ENCODE measurements at regions of chr19 and their contacts with region 1.

Region 1: DNA sequence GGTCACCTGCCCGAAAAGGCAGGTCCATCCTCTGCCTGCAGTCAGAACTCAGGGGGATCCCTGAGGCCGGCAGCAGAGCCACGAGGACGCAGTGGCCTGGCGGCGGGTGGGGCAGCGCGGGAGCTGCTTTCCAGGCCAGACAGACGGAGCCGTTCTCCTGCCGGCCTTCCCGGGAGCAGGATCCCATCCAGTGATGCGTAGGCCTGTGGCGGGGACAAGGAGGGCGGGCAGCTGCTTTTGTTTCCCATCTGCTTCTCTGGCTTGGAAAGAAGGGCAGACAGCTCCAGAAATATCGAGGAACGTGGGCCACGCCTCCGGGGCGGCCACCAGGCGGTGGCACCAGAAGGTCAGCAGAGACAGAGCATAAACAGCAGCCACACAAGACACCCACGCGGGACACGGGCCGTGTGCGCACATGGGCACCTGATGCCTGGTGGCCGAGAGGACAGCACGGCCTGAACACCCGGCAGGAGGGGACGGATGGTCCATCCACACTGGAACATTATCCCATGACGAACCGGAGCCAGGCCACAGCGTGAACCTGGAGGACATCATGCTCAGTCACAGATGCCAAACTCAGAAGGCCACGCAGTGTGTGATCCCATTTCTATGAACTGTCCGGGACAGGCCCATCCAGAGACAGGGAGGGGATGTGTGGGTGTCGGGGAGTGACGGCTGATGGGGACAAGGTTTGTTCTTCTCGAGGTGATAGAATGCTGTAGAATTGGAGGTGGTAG is 13.9 kb upstream of the MKNK2 start:
- DNase-seq: no peak
- ATAC-seq: no peak
- H3K4me3 ChIP-seq: no peak overlapping the region
- H3K27ac ChIP-seq: peak overlapping the region; percentile 61
- H3K4me1 ChIP-seq: peaks cover 28% of the 10 kb centered on the region
- H3K27me3 ChIP-seq: no peaks in the 10 kb centered on the region
- CTCF ChIP-seq: no peak

Region 2: DNA sequence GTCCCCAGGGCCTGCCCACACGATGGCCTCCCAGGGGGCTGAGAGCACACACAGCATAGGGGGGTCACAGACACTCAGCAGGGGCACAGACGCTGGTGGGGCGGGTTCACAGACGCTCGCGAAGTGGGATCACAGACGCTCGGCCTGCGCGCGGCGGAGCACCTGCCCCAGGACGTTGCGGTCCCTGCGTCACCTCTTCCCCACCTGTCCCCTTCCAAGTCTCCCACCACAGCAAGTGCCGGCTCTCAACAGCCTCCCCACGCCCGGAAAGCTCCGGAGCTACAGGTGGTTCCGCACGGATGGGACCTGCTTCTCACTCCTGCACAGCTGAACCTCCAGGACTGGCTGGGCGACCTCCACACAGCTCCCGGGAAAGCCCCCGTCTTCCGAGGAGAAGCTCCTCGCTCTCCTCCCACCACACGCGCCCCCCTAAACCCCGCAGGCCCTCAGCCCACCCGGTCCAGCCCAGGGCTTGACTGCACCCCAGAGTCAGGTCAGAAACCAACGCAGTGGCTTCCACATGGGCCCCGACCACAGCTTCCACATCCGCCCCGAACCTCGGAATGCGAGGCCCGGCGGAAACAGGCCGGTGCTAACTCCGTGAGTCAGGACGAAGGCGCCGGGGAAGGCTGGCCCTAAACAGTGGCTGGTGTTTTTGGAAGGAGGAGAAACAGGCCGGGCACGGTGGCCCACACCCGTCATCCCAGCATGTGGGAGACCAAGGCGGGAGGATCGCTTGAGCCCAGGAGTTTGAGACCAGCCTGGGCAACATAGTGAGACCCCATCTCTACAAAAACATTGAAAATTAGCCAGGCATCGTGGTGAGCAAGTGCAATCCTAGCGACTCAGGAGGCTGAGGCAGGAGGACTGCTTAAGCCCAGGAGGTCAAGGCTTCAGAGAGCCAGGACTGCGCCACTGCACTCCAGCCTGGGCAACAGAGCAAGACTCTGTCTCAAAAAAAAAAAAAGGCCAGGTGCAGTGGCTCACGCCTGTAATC is 65.9 kb before region 1 on chr19:
- intact Hi-C with region 1: no loop called
- DNase-seq: no peak
- ATAC-seq: peak; percentile 19
- H3K4me3 ChIP-seq: no peak overlapping the region
- H3K27ac ChIP-seq: no peak overlapping the region
- H3K4me1 ChIP-seq: no peaks in the 10 kb centered on the region
- H3K27me3 ChIP-seq: no peaks in the 10 kb centered on the region
- CTCF ChIP-seq: no peak

Region 3: DNA sequence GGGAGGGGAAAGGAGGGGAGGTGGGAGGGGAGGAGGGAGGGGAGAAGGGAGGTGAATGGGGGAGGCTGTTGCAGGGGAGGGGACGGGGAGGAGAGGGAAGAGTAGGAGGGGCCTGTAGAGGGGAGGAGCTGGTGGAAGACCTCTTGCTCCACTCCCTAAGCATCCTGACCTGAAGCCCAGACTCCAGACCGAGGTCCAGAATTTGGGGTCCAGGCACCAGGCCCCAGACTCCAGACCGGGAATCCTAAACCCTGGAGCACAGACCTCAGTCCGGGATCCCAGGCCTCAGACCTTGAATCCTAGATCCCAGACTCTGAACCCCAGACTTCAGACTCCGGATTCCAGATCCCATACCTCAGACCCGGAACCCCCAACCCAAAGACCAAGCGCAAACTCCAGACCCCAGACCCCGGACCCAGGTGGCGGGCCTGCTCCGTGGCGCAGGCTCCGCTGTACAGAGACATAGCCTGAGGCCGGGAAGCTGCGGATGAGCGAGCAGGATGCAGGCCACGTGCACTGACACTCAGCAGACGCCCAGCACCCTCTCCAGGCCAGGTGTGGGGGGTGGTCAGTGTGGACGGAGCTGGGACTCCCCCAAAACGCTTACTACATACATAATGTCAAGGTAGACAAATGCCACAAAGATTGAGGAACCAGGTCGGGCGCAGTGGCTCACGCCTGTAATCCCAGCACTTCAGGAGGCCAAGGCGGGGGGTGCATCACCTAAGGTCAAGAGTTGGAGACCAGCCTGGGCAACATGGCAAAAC is 48.7 kb before region 1 on chr19:
- intact Hi-C with region 1: loop called (anchors 5 kb)
- DNase-seq: no peak
- ATAC-seq: peak; percentile 85
- H3K4me3 ChIP-seq: peak overlapping the region; percentile 20
- H3K27ac ChIP-seq: no peak overlapping the region
- H3K4me1 ChIP-seq: peaks cover 5% of the 10 kb centered on the region
- H3K27me3 ChIP-seq: no peaks in the 10 kb centered on the region
- CTCF ChIP-seq: no peak